ENCODE measurements at regions of chr14 and their contacts with region 1.

Region 1: DNA sequence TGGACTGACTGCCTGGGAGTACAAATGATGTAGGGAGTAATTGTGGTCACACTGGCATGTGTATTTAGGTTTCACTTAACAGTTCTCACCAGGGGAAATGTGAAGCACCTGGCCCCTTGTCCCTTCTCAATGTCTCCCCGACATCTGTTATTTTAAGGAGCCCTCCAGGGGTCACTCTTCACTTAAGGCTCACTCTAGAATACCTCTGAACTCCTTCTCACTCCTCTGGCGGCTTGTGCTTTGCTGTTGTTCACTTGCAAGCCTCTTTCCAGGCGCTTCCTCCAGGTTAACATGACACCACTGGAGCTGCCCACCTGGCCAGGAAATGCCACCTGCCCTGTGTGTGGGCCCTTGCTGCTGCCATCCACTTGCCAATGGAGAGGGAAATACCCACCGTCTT is 56.5 kb upstream of the GZMB start:
- DNase-seq: peak in 2 of 9 experiments; percentile 51 to 66
- ATAC-seq: no peak
- H3K4me3 ChIP-seq: no peak overlapping the region
- H3K4me3 Mint-ChIP-seq: no peak overlapping the region
- H3K27ac ChIP-seq: peak overlapping the region in 1 of 2 experiments; percentile 1
- H3K27ac Mint-ChIP-seq: no peak overlapping the region
- H3K4me1 ChIP-seq: peaks cover 44% of the 10 kb centered on the region
- H3K4me1 Mint-ChIP-seq: peaks cover 24% of the 10 kb centered on the region
- H3K27me3 ChIP-seq: no peaks in the 10 kb centered on the region
- H3K27me3 Mint-ChIP-seq: no peaks in the 10 kb centered on the region
- CTCF ChIP-seq: no peak

Region 2: GRCh38 chr14:24673534-24674203 is 16.8 kb before region 1 on chr14:
- CTCF ChIA-PET with region 1: interaction called, 21 read pairs
- POLR2A ChIA-PET with region 1: interaction called, 9 read pairs
- intact Hi-C with region 1: loop called (anchors 1 to 2 kb)
- DNase-seq: peak; percentile 28 to 93 (median 63)
- ATAC-seq: peak; percentile 73
- H3K4me3 ChIP-seq: peak overlapping the region; percentile 21 to 27
- H3K4me3 Mint-ChIP-seq: peak overlapping the region; percentile 75
- H3K27ac ChIP-seq: peak overlapping the region; percentile 27 to 83
- H3K27ac Mint-ChIP-seq: peak overlapping the region; percentile 94
- H3K4me1 ChIP-seq: peaks cover 34% of the 10 kb centered on the region
- H3K4me1 Mint-ChIP-seq: peaks cover 58% of the 10 kb centered on the region
- H3K27me3 ChIP-seq: no peaks in the 10 kb centered on the region
- H3K27me3 Mint-ChIP-seq: no peaks in the 10 kb centered on the region
- CTCF ChIP-seq: no peak

Measured in CD8-positive, alpha-beta T cell (primary cell).